ENCODE measurements at regions of chr3 and their contacts with region 1.

Region 1: GRCh38 chr3:194333212-194333980 is 17.7 kb downstream of the CPN2 start:
- DNase-seq: peak; percentile 97
- H3K4me3 Mint-ChIP-seq: peak overlapping the region; percentile 77
- H3K27ac Mint-ChIP-seq: peak overlapping the region; percentile 90
- H3K4me1 Mint-ChIP-seq: peaks cover 28% of the 10 kb centered on the region
- H3K27me3 Mint-ChIP-seq: no peaks in the 10 kb centered on the region
- CTCF ChIP-seq: peak; percentile 97

Region 2: GRCh38 chr3:194141415-194142155 is 191.8 kb before region 1 on chr3:
- CTCF ChIA-PET with region 1: no interaction called
- POLR2A ChIA-PET with region 1: interaction called, 20 read pairs
- intact Hi-C with region 1: no loop called
- DNase-seq: peak; percentile 97
- H3K4me3 Mint-ChIP-seq: peak overlapping the region; percentile 59
- H3K27ac Mint-ChIP-seq: peak overlapping the region; percentile 94
- H3K4me1 Mint-ChIP-seq: peaks cover 26% of the 10 kb centered on the region
- H3K27me3 Mint-ChIP-seq: no peaks in the 10 kb centered on the region
- CTCF ChIP-seq: no peak

Region 3: DNA sequence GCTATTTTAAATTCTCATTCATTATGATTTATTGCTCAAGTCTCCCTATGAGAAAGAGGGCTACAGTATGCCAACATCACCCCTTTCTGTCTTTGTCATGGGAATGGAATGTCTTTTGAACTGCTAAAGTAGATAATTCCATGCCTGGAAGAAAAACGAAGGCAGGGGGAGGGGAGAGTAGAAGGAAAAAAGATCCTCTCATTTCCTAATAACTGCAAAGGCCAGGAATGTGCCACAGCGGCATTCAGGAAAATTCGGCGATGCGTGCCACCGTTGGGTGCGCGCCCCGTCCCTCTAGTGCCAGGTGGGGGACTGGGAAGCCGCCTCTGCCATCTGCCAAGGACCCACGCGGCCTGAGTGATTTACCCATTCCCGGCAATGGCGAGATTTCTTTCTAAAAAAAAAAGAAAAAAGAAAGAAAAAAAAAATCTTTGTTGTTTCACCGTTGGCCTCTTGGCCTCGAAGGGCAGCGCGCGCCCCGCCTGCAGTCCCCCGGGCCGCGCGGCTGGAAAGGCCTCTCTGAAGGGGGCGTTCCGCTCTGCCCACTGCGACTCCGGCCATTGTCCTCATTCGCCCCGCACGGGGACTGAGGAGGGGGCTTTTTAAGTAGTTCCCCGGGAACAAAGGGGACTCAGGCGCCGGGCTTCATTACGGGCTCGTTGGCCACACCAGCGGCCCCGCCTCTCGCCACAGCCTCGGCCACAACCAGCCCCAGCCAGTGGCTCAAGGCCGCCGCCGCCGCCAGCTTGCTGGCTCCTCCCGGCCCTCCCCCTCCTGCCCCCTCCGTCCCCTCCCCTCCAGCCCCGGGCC is 36.7 kb before region 1 on chr3:
- CTCF ChIA-PET with region 1: no interaction called
- POLR2A ChIA-PET with region 1: no interaction called
- intact Hi-C with region 1: loop called (anchors 1 kb)
- DNase-seq: peak; percentile 97
- H3K4me3 Mint-ChIP-seq: no peak overlapping the region
- H3K27ac Mint-ChIP-seq: peak overlapping the region; percentile 12
- H3K4me1 Mint-ChIP-seq: peaks cover 6% of the 10 kb centered on the region
- H3K27me3 Mint-ChIP-seq: no peaks in the 10 kb centered on the region
- CTCF ChIP-seq: no peak

Region 4: GRCh38 chr3:194404365-194405140 is 71.2 kb after region 1 on chr3:
- CTCF ChIA-PET with region 1: interaction called, 5 read pairs
- POLR2A ChIA-PET with region 1: no interaction called
- intact Hi-C with region 1: loop called (anchors 1 kb)
- DNase-seq: peak; percentile 60
- H3K4me3 Mint-ChIP-seq: no peak overlapping the region
- H3K27ac Mint-ChIP-seq: no peak overlapping the region
- H3K4me1 Mint-ChIP-seq: no peaks in the 10 kb centered on the region
- H3K27me3 Mint-ChIP-seq: no peaks in the 10 kb centered on the region
- CTCF ChIP-seq: peak; percentile 72

Region 5: DNA sequence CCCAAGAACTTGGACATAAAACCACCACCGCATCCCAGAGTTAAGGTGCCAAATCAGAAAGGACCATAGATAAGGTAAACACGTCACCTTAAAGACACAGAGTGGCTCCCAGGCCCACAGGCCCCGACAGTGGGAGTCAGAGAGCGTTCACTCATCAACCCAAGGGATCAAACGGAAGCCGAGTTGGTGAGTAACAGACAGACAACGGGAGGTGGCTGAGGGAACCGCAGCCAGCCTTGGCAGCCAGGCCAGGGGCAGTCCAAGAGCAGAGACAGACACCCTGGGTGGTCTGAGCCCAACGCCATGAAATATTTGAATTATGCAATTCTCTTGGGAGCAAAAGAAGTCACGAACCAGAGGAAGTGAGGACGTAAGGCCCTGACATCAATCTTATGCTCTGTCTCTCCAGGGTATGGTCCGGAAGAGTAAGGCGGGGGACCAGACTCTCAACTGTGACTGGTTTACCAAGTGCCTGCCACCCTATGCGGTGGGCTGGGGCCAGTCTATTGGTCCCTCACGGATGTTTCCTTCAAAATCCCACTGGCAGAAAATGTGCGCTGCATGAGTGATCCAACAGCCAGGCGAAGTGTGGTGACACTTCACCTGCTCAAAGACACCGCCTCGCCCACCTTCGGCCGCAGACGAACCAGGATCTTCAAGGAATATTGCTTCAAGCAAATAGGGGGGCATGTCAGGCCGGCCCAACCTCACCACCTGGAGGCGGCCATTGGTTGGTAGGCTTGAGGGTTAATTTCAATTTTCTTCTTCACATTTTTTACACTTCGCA is 265.6 kb after region 1 on chr3:
- CTCF ChIA-PET with region 1: no interaction called
- POLR2A ChIA-PET with region 1: no interaction called
- intact Hi-C with region 1: no loop called
- DNase-seq: peak; percentile 78
- H3K4me3 Mint-ChIP-seq: no peak overlapping the region
- H3K27ac Mint-ChIP-seq: no peak overlapping the region
- H3K4me1 Mint-ChIP-seq: no peaks in the 10 kb centered on the region
- H3K27me3 Mint-ChIP-seq: no peaks in the 10 kb centered on the region
- CTCF ChIP-seq: no peak